Testis (tissue), 5 donors: ENCODE measurements at regions of chr16 and their contacts with region 1.

Region 1: DNA sequence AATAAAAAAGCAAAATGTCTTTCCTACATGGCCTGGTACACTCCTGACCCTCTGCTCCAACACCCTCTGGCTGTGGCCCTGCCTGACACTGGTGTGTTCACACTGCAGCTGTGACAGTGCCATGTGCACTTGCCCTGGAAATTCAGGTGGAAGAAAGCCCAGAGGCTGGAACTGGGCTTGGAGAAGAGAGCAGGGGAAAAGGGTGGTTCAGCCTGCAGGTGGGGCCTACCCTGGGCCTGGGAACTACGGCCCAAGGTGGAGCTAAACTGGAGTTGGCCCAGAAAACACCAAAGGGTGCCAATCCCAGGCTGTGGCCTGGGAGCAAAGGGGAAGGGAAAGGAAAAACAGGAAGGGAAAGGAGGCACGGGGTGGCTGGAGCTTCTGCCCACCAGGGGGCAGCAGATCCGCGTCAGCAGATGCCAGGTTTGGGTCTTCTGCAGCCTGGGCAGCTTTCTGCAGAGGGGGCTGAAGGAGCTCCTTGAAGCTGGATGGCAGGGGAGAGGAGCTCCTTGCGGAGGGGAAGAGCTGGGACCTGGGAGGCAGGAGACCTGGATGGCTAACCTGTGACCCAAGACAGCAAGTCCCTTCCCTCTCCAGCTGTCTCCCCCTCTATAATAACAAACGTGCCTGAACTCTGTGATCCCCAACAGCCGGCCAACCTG is 15.4 kb upstream of the CTCF start:
- DNase-seq: peak; percentile 77
- H3K4me3 ChIP-seq: no peak overlapping the region
- H3K27ac ChIP-seq: no peak overlapping the region
- H3K4me1 ChIP-seq: peaks cover 11% of the 10 kb centered on the region
- H3K27me3 ChIP-seq: no peaks in the 10 kb centered on the region
- CTCF ChIP-seq: peak; percentile 84 to 90 (median 87)
- POLR2A ChIP-seq: no peak

Region 2: GRCh38 chr16:67641779-67642708 is 95.2 kb after region 1 on chr16:
- intact Hi-C with region 1: loop called (anchors 10 kb)
- DNase-seq: peak; percentile 73
- H3K4me3 ChIP-seq: no peak overlapping the region
- H3K27ac ChIP-seq: no peak overlapping the region
- H3K4me1 ChIP-seq: no peaks in the 10 kb centered on the region
- H3K27me3 ChIP-seq: no peaks in the 10 kb centered on the region
- CTCF ChIP-seq: no peak
- POLR2A ChIP-seq: no peak